ENCODE measurements at regions of chr15 and their contacts with region 1.

Region 1: DNA sequence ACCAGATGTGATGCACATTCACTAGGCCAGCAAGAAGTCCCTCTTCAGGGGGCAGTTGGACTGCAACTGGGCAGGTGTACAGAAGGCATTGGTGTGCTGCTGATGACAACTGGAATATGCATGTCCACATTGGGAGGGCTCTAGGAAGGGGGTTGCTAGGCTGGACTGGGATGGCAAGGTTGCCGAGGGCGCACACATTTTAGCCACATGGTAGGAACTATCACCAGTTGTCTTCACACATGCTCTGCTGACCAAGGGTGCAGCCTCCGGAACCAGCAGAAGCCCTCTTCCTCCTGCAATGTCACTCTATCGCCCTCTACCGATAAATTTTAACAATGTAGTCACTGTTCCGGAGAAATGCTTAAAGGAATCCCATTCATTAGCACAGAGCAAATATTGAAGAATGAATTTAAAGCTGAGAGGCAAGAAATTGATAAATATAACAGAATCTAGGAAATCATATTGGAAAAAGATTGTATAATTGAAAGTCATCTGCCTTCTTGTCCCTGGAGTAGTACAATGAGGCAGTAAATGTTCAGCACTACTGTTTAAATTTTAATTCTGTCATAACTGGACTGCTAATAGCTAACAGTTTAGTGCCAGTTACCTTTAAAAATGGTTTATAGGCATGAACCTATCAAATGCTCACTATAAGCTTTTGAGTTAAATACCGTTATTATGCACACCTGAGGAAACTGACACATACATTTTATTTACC is 22.6 kb upstream of the LYSMD4 start:
- DNase-seq: no peak
- H3K4me3 ChIP-seq: no peak overlapping the region
- H3K27ac ChIP-seq: no peak overlapping the region
- H3K4me1 ChIP-seq: no peaks in the 10 kb centered on the region
- H3K27me3 ChIP-seq: no peaks in the 10 kb centered on the region
- CTCF ChIP-seq: peak; percentile 47 to 73 (median 67)
- POLR2A ChIP-seq: no peak

Region 2: GRCh38 chr15:99275525-99276128 is 480.2 kb before region 1 on chr15:
- intact Hi-C with region 1: loop called (anchors 10 kb)
- DNase-seq: no peak
- H3K4me3 ChIP-seq: no peak overlapping the region
- H3K27ac ChIP-seq: no peak overlapping the region
- H3K4me1 ChIP-seq: no peaks in the 10 kb centered on the region
- H3K27me3 ChIP-seq: no peaks in the 10 kb centered on the region
- CTCF ChIP-seq: no peak
- POLR2A ChIP-seq: no peak

Region 3: DNA sequence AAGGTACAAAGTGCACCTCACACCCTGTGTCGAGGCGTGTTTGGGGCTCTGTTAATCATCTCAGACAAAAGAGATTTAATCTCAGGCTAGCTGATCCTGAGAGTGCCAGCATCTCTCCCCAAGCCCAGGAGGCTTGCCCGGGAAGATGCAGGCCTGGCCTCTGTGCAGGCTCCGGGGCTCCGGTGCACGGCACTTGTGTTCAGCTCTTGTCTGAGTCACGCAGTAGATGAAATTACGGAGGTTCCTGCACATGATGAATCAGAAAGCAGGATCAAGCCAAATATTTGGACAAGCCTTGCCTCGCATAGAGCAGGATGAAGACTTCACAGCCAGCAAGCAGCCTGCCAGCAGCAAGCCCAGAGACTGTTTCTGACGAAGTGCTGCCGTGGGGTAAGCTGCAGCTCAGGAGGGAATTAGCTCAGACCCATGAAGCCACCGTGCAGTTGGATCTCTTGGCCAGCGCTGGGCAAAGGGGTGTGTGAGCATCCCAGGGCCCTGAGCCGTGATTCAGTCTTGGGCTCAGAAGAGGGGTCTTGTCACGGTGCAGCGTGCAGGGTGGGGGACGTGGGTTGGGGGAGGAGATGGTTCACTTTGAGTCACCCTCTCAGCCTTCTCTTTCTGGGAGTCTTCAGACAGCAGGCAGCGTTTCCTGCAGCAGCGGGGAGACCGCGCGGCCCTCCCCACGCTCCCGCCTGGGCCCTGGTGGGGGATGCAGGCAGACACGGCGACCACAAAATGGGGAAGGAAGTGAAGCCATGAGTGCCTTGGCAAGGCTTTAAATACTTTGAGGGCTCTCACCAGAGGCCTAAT is 279.2 kb before region 1 on chr15:
- intact Hi-C with region 1: no loop called
- DNase-seq: peak; percentile 96 to 97
- H3K4me3 ChIP-seq: no peak overlapping the region
- H3K27ac ChIP-seq: peak overlapping the region; percentile 62
- H3K4me1 ChIP-seq: peaks cover 36% of the 10 kb centered on the region
- H3K27me3 ChIP-seq: no peaks in the 10 kb centered on the region
- CTCF ChIP-seq: no peak
- POLR2A ChIP-seq: no peak

Region 4: GRCh38 chr15:99719096-99719541 is 36.7 kb before region 1 on chr15:
- intact Hi-C with region 1: no loop called
- DNase-seq: peak in 1 of 2 donors; percentile 7
- H3K4me3 ChIP-seq: no peak overlapping the region
- H3K27ac ChIP-seq: no peak overlapping the region
- H3K4me1 ChIP-seq: peaks cover 32% of the 10 kb centered on the region
- H3K27me3 ChIP-seq: no peaks in the 10 kb centered on the region
- CTCF ChIP-seq: no peak
- POLR2A ChIP-seq: no peak